Endothelial cell of umbilical vein (primary cell): ENCODE measurements at regions of chr10 and their contacts with region 1.

Region 1: GRCh38 chr10:6721480-6721879 is 141.4 kb upstream of the PRKCQ start:
- DNase-seq: peak; percentile 94
- H3K4me3 ChIP-seq: peak overlapping the region in 1 of 3 experiments; percentile 55
- H3K27ac ChIP-seq: peak overlapping the region; percentile 100
- H3K4me1 ChIP-seq: peaks cover 29% of the 10 kb centered on the region
- H3K27me3 ChIP-seq: no peaks in the 10 kb centered on the region
- CTCF ChIP-seq: peak; percentile 22 to 38
- POLR2A ChIP-seq: no peak

Region 2: GRCh38 chr10:6088721-6089390 is 632.6 kb before region 1 on chr10 and contains the start of gene RBM17:
- CTCF ChIA-PET with region 1: no interaction called
- POLR2A ChIA-PET with region 1: no interaction called
- dilution Hi-C with region 1: no loop called
- intact Hi-C with region 1: loop called (anchors 10 kb)
- DNase-seq: peak; percentile 97
- H3K4me3 ChIP-seq: peak within 1 kb of the TSS; percentile 59 to 85 (median 74)
- H3K27ac ChIP-seq: peak within 1 kb of the TSS; percentile 83
- H3K4me1 ChIP-seq: peaks cover 37% of the 10 kb centered on the region
- H3K27me3 ChIP-seq: no peaks in the 10 kb centered on the region
- CTCF ChIP-seq: peak; percentile 100
- POLR2A ChIP-seq: peak; percentile 83
- total RNA-seq, gene RBM17: 148 TPM in 2 replicates

Region 3: GRCh38 chr10:6748978-6749635 is 27.6 kb after region 1 on chr10:
- CTCF ChIA-PET with region 1: interaction called, 6 read pairs
- POLR2A ChIA-PET with region 1: no interaction called
- dilution Hi-C with region 1: no loop called
- intact Hi-C with region 1: loop called (anchors 1 kb)
- DNase-seq: peak; percentile 59
- H3K4me3 ChIP-seq: no peak overlapping the region
- H3K27ac ChIP-seq: peak overlapping the region; percentile 42
- H3K4me1 ChIP-seq: peaks cover 16% of the 10 kb centered on the region
- H3K27me3 ChIP-seq: no peaks in the 10 kb centered on the region
- CTCF ChIP-seq: no peak
- POLR2A ChIP-seq: no peak

Region 4: GRCh38 chr10:6920072-6921019 is 198.9 kb after region 1 on chr10:
- CTCF ChIA-PET with region 1: no interaction called
- POLR2A ChIA-PET with region 1: no interaction called
- dilution Hi-C with region 1: no loop called
- intact Hi-C with region 1: loop called (anchors 2 kb)
- DNase-seq: peak; percentile 48
- H3K4me3 ChIP-seq: no peak overlapping the region
- H3K27ac ChIP-seq: no peak overlapping the region
- H3K4me1 ChIP-seq: peaks cover 5% of the 10 kb centered on the region
- H3K27me3 ChIP-seq: no peaks in the 10 kb centered on the region
- CTCF ChIP-seq: peak; percentile 46 to 70
- POLR2A ChIP-seq: no peak

Region 5: DNA sequence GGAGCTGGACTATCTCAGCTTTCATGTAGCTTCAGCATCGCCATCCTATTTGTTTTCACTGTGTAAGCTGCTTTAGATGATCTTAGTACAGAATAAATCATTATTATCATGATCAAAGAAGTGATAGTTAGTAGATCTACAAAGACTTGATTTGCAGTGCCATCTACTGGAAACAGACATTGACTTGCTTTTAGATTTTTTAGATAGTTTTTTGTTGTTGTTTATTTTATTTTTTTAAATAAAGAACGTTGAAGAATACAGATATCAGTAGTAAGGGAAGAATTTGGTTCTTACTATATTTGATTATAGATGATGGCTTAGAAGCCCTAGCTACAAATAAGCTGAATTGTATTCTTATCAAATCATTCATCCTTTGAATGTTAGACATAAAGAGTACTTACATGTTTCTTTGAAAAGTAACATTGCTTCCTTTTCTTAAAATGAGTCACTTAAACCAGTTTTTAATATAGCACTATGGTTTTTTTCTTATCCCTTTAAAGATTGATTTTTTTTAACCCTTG is 695.7 kb after region 1 on chr10:
- CTCF ChIA-PET with region 1: interaction called, 10 read pairs
- POLR2A ChIA-PET with region 1: no interaction called
- dilution Hi-C with region 1: no loop called
- intact Hi-C with region 1: no loop called
- DNase-seq: peak; percentile 58
- H3K4me3 ChIP-seq: no peak overlapping the region
- H3K27ac ChIP-seq: no peak overlapping the region
- H3K4me1 ChIP-seq: no peaks in the 10 kb centered on the region
- H3K27me3 ChIP-seq: peaks cover 27 to 29% of the 10 kb centered on the region in 2 experiments
- CTCF ChIP-seq: peak in 1 of 2 donors; percentile 14
- POLR2A ChIP-seq: no peak